BJ (cell line): ENCODE measurements at regions of chr7 and their contacts with region 1.

Region 1: DNA sequence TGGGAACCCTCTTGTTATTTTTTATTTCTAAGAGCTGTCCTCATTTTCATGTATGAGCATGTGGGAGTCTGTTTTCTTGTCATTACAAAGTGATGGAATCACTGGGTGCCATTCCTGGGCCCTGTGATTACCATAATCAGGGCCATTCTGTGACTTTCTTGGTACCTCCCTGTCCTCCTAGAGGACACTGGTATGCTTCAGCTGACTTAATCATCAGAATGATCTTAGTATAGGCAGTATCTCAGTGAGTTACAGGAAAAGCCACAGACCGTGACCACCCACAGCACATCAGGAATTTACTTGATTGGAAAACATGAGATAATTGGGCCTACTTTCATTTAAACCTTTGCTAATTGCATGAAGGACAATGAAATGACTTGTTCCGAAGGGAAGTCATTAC is 7.2 kb downstream of the NOM1 start:
- DNase-seq: no peak
- H3K4me3 ChIP-seq: no peak overlapping the region
- H3K27me3 ChIP-seq: no peaks in the 10 kb centered on the region
- CTCF ChIP-seq: no peak

Region 2: GRCh38 chr7:156892821-156893706 is 63.7 kb before region 1 on chr7 and contains the start of gene LMBR1:
- CTCF ChIA-PET with region 1: no interaction called
- POLR2A ChIA-PET with region 1: no interaction called
- DNase-seq: peak; percentile 55
- H3K4me3 ChIP-seq: peak within 1 kb of the TSS; percentile 68
- H3K27me3 ChIP-seq: no peaks in the 10 kb centered on the region
- CTCF ChIP-seq: peak; percentile 65
- polyA plus RNA-seq, gene LMBR1: 5.3 and 12.2 TPM in 2 replicates

Region 3: GRCh38 chr7:156943091-156944041 is 13.4 kb before region 1 on chr7:
- CTCF ChIA-PET with region 1: no interaction called
- POLR2A ChIA-PET with region 1: no interaction called
- DNase-seq: no peak
- H3K4me3 ChIP-seq: no peak overlapping the region
- H3K27me3 ChIP-seq: peaks cover 18% of the 10 kb centered on the region
- CTCF ChIP-seq: no peak

Region 4: DNA sequence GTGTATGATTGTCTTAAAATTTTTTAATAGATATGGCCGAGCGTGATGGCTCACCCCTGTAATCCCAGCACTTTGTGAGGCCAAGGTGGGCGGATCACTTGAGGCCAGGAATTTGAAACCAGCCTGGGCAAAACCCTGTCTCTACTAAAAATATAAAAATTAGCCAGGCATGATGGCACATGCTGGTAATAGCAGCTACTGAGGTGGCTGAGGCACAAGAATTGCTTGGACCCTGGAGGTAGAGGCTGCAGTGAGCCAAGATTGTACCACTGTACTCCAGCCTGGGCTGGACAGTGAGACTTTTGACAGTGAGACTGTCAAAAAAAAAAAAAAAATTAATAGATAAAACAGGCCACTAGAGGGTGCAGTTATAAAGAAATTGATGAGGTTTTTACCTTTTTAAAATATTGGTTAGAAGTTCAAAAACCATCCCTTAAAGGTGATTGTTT is 13.3 kb after region 1 on chr7:
- CTCF ChIA-PET with region 1: interaction called, 12 read pairs
- POLR2A ChIA-PET with region 1: no interaction called
- DNase-seq: no peak
- H3K4me3 ChIP-seq: no peak overlapping the region
- H3K27me3 ChIP-seq: no peaks in the 10 kb centered on the region
- CTCF ChIP-seq: peak; percentile 25